ENCODE measurements at regions of chr15 and their contacts with region 1.

Region 1: GRCh38 chr15:89836255-89837133 is 21.8 kb upstream of the ANPEP start:
- DNase-seq: no peak
- ATAC-seq: peak; percentile 48 to 71; a peak in 4 of 6 replicates
- H3K4me3 ChIP-seq: no peak overlapping the region
- H3K27ac ChIP-seq: peak overlapping the region; percentile 51 to 75; a peak in 5 of 6 replicates
- H3K4me1 ChIP-seq: peaks cover 25% of the 10 kb centered on the region
- CTCF ChIP-seq: no peak
- EP300 ChIP-seq: no peak
- POLR2A ChIP-seq: no peak
- RAD21 ChIP-seq: no peak

Region 2: DNA sequence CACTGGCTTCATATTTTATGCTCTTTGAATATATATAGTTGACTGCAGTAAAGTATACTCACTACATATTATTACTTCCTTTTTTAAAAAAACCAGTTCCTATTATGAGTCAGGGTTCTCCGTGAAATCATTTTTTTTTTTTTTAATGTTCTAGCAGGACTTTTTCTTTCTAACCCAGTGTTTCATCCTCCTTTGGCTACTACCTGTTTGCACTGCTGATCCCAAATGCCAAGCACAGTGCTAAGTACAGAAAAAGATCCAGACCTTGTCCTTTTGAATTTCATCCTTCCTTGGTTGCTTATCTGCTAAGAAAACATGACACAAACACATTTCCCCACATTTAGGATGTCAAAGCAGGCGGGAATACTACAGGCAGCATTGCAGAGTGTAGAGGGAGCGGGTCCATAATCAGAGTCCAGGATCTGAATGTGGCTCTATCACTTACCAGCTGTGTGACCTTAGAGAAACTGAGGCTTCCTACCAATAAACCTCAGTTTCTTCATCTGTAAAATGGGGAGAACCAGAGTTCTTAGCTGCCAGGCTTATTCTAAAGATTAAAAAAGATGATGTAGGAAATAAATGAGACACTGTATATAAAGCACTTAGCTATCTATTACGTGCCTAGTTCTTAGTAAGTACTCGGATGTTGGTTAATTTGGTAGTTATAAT is 15.3 kb after region 1 on chr15:
- CTCF ChIA-PET with region 1: interaction called, 11 read pairs
- POLR2A ChIA-PET with region 1: no interaction called
- DNase-seq: no peak
- ATAC-seq: no peak
- H3K4me3 ChIP-seq: no peak overlapping the region
- H3K27ac ChIP-seq: peak overlapping the region in 1 of 2 experiments; percentile 3; a peak in 1 of 6 replicates
- H3K4me1 ChIP-seq: peaks cover 48% of the 10 kb centered on the region
- CTCF ChIP-seq: no peak
- EP300 ChIP-seq: no peak
- POLR2A ChIP-seq: no peak
- RAD21 ChIP-seq: no peak

Region 3: GRCh38 chr15:89926158-89926557 is 89.7 kb after region 1 on chr15:
- CTCF ChIA-PET with region 1: no interaction called
- POLR2A ChIA-PET with region 1: no interaction called
- DNase-seq: no peak
- ATAC-seq: no peak
- H3K4me3 ChIP-seq: no peak overlapping the region
- H3K27ac ChIP-seq: no peak overlapping the region
- H3K4me1 ChIP-seq: no peaks in the 10 kb centered on the region
- CTCF ChIP-seq: no peak
- EP300 ChIP-seq: no peak
- POLR2A ChIP-seq: no peak
- RAD21 ChIP-seq: no peak

Region 4: DNA sequence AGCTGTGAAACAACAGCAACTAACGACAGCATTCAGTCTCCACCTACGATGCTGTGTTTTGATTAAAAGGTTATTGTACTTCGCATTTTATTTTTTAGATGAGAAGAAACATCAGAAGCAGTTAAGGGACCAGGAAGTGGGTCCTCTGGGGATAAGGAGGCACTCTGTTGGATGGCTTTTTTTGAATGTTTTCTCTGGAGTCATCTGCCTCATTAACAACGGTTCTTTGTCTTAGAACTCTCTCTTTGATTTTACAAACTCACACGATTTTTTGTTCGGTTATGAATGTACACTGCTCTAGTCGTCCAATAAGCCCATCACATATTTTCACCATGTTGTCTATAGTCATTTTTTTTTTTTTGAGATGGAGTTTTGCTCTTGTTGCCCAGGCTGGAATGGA is 112.3 kb after region 1 on chr15:
- CTCF ChIA-PET with region 1: no interaction called
- POLR2A ChIA-PET with region 1: no interaction called
- DNase-seq: no peak
- ATAC-seq: no peak
- H3K4me3 ChIP-seq: no peak overlapping the region
- H3K27ac ChIP-seq: no peak overlapping the region
- H3K4me1 ChIP-seq: no peaks in the 10 kb centered on the region
- CTCF ChIP-seq: no peak
- EP300 ChIP-seq: no peak
- POLR2A ChIP-seq: no peak
- RAD21 ChIP-seq: no peak